BJ (cell line): ENCODE measurements at regions of chr14 and their contacts with region 1.

Region 1: DNA sequence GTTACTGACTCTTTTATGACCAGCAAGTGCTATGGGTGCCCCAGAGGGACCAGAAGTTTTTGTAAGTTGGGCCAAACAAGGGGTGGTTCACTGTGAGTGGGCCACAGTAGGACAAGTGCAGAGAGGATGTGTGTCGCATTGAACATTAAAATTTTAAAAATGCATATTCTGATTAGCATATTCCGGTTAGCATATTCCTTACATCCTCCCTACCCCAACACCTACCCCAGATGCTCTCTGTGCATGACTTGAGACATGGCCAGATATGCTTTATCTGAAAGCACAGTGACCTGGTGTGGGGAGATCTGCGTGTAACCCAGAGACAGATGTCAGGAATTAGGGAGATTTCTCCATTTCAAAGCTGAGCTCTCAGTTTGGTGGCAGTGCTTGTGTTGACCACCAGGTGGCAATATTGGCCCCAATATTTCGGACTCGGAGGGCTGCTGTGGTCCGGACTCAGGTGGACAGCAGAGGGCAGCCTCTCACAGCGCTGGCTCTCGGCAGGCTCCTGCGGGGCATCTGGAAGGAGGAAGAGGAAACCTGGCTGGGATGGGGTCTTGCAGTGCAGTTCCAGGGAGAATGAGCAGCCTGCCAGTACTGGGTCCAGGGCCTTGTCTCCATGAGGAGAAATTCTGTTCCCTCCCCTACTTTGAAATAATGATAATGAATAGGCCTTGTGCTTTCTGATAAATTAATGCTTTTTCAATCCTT is 1.6 kb upstream of the CEBPE start:
- DNase-seq: no peak
- H3K4me3 ChIP-seq: no peak overlapping the region
- H3K27me3 ChIP-seq: no peaks in the 10 kb centered on the region
- CTCF ChIP-seq: peak; percentile 100

Region 2: GRCh38 chr14:22973217-22974032 is 147.3 kb before region 1 on chr14:
- CTCF ChIA-PET with region 1: no interaction called
- POLR2A ChIA-PET with region 1: no interaction called
- DNase-seq: no peak
- H3K4me3 ChIP-seq: no peak overlapping the region
- H3K27me3 ChIP-seq: no peaks in the 10 kb centered on the region
- CTCF ChIP-seq: peak; percentile 65

Region 3: GRCh38 chr14:23068476-23069412 is 52.0 kb before region 1 on chr14:
- CTCF ChIA-PET with region 1: interaction called, 144 read pairs
- POLR2A ChIA-PET with region 1: no interaction called
- DNase-seq: peak; percentile 70
- H3K4me3 ChIP-seq: no peak overlapping the region
- H3K27me3 ChIP-seq: no peaks in the 10 kb centered on the region
- CTCF ChIP-seq: peak; percentile 99

Region 4: GRCh38 chr14:23095196-23096108 is 25.2 kb before region 1 on chr14 and contains the start of gene C14orf119:
- CTCF ChIA-PET with region 1: interaction called, 11 read pairs
- POLR2A ChIA-PET with region 1: no interaction called
- DNase-seq: peak; percentile 99
- H3K4me3 ChIP-seq: peak within 1 kb of the TSS; percentile 89
- H3K27me3 ChIP-seq: no peaks in the 10 kb centered on the region
- CTCF ChIP-seq: no peak
- polyA plus RNA-seq, gene C14orf119: 104 and 112 TPM in 2 replicates

Region 5: DNA sequence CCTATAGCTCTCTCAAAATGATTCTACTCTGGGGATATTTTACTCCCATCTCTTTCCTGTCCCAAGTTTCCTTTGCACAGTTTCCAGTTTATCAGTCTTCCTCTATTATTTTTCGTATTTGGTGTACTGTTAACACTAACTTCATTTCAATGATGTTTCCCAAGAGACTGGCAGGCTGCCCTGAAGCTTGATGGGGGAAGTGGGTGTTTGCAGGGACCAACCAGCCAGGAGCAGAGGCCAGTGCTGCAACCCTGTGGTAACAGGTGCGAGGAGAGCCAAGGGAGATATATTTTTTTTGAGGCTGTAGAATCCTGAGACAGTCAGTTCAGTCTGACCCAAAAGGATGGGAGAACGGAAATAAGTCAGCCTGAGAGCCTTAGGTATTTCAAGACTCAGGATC is 10.2 kb after region 1 on chr14:
- CTCF ChIA-PET with region 1: interaction called, 29 read pairs
- POLR2A ChIA-PET with region 1: no interaction called
- DNase-seq: no peak
- H3K4me3 ChIP-seq: no peak overlapping the region
- H3K27me3 ChIP-seq: no peaks in the 10 kb centered on the region
- CTCF ChIP-seq: no peak

Region 6: DNA sequence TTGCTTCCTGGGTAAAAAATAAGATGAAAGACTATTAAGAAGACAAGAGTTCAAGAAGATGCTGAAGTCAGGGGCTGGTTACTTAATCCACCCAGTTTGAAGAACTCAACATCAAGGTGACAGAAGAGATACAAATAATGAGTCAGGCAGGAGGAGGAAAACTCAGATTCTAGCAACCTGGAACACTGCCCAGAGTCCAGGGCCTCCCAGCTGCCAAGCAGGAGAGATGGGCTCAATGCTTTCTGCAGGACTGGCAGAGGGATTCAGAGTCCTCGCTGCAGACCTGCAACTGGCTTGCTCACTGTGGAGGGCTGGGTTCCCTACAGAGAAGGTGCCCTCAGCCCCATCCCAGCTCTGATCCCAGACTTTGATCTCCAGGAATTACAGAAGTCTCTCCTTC is 27.0 kb after region 1 on chr14:
- CTCF ChIA-PET with region 1: interaction called, 20 read pairs
- POLR2A ChIA-PET with region 1: no interaction called
- DNase-seq: no peak
- H3K4me3 ChIP-seq: no peak overlapping the region
- H3K27me3 ChIP-seq: no peaks in the 10 kb centered on the region
- CTCF ChIP-seq: no peak

Region 7: GRCh38 chr14:23160924-23161538 is 40.3 kb after region 1 on chr14:
- CTCF ChIA-PET with region 1: interaction called, 815 read pairs
- POLR2A ChIA-PET with region 1: no interaction called
- DNase-seq: no peak
- H3K4me3 ChIP-seq: no peak overlapping the region
- H3K27me3 ChIP-seq: no peaks in the 10 kb centered on the region
- CTCF ChIP-seq: no peak

Region 8: GRCh38 chr14:23195550-23196101 is 74.9 kb after region 1 on chr14:
- CTCF ChIA-PET with region 1: interaction called, 815 read pairs
- POLR2A ChIA-PET with region 1: no interaction called
- DNase-seq: no peak
- H3K4me3 ChIP-seq: no peak overlapping the region
- H3K27me3 ChIP-seq: no peaks in the 10 kb centered on the region
- CTCF ChIP-seq: no peak